Activated naive CD4-positive, alpha-beta T cell treated with anti-CD3 and anti-CD28 coated beads for 36 hours (primary cell): ENCODE measurements at regions of chr2 and their contacts with region 1.

Region 1: DNA sequence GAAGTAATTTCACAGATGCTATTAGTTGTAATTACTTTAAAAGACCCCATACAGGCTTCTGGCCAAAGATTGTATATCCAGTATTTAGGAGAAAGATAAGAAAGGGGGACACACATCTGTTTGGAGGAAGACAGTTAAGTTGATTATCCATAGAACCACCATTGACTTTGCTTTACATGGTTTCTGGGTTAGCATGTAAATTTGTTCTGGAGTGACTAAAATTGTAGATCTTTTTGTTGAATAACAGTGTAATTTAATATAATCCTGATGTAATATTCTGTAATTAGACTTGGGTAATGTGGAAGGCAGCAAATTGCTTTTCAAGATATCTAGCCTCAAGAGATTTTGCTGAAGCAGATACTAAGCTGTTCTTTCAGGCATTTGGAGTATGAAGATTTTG is 17.2 kb downstream of the COMMD1 start:
- DNase-seq: no peak
- H3K4me3 Mint-ChIP-seq: no peak overlapping the region
- H3K27ac Mint-ChIP-seq: no peak overlapping the region
- H3K4me1 Mint-ChIP-seq: no peaks in the 10 kb centered on the region
- H3K27me3 Mint-ChIP-seq: no peaks in the 10 kb centered on the region

Region 2: DNA sequence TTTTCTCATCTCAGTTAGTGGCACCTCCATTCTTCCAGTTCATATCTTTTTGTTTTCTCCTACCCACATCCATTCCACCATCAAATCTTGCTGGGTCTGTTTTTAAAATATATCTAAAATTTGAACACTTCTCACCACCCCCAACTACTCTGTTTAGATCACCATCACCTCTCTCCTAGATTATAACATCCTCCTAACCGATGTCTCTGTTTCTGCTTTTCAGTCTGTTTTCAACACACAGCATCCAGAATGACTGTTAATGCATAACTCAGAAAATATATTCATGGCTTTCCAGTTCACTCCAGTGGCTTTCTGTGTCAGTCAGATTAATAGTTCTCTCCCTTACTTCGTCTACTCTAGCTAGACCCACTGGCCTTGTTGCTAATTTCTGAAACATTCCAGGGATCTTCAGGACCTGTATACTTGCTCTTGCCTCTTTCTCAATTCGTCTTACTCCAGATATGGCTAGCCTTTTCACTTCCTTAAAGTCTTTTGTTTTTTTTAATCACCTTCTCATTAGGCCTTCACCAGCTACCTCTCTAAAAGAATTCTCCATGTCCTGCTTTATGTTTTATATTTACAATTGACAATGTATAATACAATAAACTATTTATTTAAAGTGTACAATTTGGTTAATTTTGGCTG is 88.0 kb after region 1 on chr2:
- CTCF ChIA-PET with region 1: no interaction called
- intact Hi-C with region 1: no loop called
- DNase-seq: no peak
- H3K4me3 Mint-ChIP-seq: no peak overlapping the region
- H3K27ac Mint-ChIP-seq: no peak overlapping the region
- H3K4me1 Mint-ChIP-seq: no peaks in the 10 kb centered on the region
- H3K27me3 Mint-ChIP-seq: no peaks in the 10 kb centered on the region

Region 3: DNA sequence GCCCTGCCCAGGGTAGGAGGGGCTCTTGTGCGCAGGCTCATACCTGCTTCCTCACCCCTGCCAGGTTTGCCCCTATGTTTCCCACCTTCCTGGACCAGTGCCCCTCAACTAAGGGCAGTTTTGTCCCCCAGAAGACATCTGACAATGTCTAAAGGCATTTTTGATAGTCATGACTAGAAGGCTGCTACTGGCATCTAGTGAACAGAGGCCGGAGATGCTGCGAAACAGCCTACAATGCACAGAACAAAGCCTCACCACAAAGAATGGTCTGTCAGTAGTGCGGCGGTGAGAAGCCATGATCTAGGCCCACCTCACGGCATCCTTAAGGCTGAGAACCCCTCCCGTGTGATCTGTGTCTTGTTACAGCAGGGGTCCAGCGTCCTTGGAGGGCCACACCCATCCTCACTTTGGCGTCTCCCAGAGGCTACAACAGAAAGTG is 487.3 kb after region 1 on chr2:
- CTCF ChIA-PET with region 1: interaction called, 8 read pairs
- intact Hi-C with region 1: loop called (anchors 1 kb)
- DNase-seq: no peak
- H3K4me3 Mint-ChIP-seq: no peak overlapping the region
- H3K27ac Mint-ChIP-seq: no peak overlapping the region
- H3K4me1 Mint-ChIP-seq: peaks cover 3% of the 10 kb centered on the region
- H3K27me3 Mint-ChIP-seq: no peaks in the 10 kb centered on the region